ENCODE measurements at regions of chr6 and their contacts with region 1.

Region 1: GRCh38 chr6:112087136-112087911 is at the starts of genes FAM229B and TUBE1:
- DNase-seq: peak; percentile 70 to 96 (median 90)
- ATAC-seq: peak; percentile 98
- H3K4me3 ChIP-seq: peak within 1 kb of the TSS; percentile 64
- H3K4me3 Mint-ChIP-seq: no peak within 1 kb of the TSS
- H3K27ac ChIP-seq: peak within 1 kb of the TSS; percentile 87
- H3K27ac Mint-ChIP-seq: peak within 1 kb of the TSS in 1 of 9 donors; percentile 65
- H3K4me1 ChIP-seq: peaks cover 0 to 7% of the 10 kb centered on the region in 2 donors
- H3K4me1 Mint-ChIP-seq: peaks cover 0 to 18% (median 10%) of the 10 kb centered on the region in 7 donors
- H3K27me3 ChIP-seq: peaks cover 0 to 3% of the 10 kb centered on the region in 2 donors
- H3K27me3 Mint-ChIP-seq: peaks cover 0 to 37% (median 6%) of the 10 kb centered on the region in 5 donors
- total RNA-seq, gene FAM229B: 0.70 to 5.8 (median 2.0) TPM
- total RNA-seq, gene TUBE1: 19.3 to 50.0 (median 35.1) TPM

Region 2: DNA sequence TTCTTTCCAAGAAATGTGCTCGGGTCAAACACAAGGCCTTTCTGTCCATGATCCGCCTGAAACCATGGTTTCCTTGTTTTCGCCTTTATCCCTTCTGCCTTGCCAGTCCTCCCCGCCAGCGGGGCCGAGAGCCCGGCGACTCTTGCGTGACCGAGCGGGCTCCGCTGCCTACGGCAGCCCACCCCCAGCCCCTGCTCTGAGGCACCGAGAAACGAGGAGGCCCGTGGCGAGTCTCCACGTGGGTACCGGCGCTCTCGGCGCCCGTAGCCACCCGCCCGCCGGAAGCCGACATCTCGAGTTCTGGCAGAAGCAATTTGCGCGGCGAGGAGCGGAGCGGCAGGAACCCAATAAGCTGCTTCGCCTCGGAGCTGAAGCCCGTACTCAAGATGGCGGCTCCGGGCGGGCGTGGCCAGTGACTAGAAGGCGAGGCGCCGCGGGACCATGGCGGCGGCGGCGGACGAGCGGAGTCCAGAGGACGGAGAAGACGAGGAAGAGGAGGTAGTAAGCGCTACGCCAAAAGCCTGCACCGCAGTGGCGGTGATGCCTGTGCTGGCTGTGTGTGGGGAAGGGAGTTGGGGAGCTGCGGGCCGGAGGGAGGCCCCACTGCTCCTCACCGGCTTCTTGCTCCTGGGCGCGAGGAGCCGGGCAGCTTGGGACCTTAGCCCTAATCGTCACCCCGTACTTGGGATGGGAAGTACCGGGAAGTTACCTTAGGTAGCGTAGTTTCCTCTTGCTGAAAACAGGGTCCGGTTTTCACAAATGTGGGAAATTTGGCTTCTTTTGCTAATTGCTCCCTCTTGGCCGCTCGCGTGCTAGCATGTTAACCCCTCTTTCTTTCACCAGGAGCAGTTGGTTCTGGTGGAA is 1128.8 kb before region 1 on chr6 and contains the start of gene GTF3C6:
- CTCF ChIA-PET with region 1: no interaction called
- POLR2A ChIA-PET with region 1: no interaction called
- intact Hi-C with region 1: loop called (anchors 1 to 2 kb)
- DNase-seq: peak; percentile 85 to 94 (median 91)
- ATAC-seq: peak; percentile 99
- H3K4me3 ChIP-seq: peak within 1 kb of the TSS; percentile 86
- H3K4me3 Mint-ChIP-seq: peak within 1 kb of the TSS; percentile 95 to 99 (median 96)
- H3K27ac ChIP-seq: peak within 1 kb of the TSS; percentile 81
- H3K27ac Mint-ChIP-seq: peak within 1 kb of the TSS; percentile 96 to 99 (median 97)
- H3K4me1 ChIP-seq: peaks cover 4% of the 10 kb centered on the region in 2 donors
- H3K4me1 Mint-ChIP-seq: peaks cover 13 to 27% (median 20%) of the 10 kb centered on the region in 7 donors
- H3K27me3 ChIP-seq: no peaks in the 10 kb centered on the region
- H3K27me3 Mint-ChIP-seq: peaks cover 0 to 7% (median 0%) of the 10 kb centered on the region in 5 donors
- total RNA-seq, gene GTF3C6: 18.1 to 100 (median 29.9) TPM

Region 3: GRCh38 chr6:111087106-111087835 is 1000.1 kb before region 1 on chr6 and contains the start of gene SLC16A10:
- CTCF ChIA-PET with region 1: no interaction called
- POLR2A ChIA-PET with region 1: no interaction called
- intact Hi-C with region 1: loop called (anchors 1 to 5 kb)
- DNase-seq: peak; percentile 75 to 92 (median 90)
- ATAC-seq: peak; percentile 95
- H3K4me3 ChIP-seq: peak within 1 kb of the TSS; percentile 83
- H3K4me3 Mint-ChIP-seq: peak within 1 kb of the TSS; percentile 85 to 100 (median 97)
- H3K27ac ChIP-seq: peak within 1 kb of the TSS; percentile 80
- H3K27ac Mint-ChIP-seq: peak within 1 kb of the TSS; percentile 54 to 99 (median 96)
- H3K4me1 ChIP-seq: peaks cover 10 to 17% of the 10 kb centered on the region in 2 donors
- H3K4me1 Mint-ChIP-seq: peaks cover 20 to 54% (median 48%) of the 10 kb centered on the region in 7 donors
- H3K27me3 ChIP-seq: no peaks in the 10 kb centered on the region
- H3K27me3 Mint-ChIP-seq: peaks cover 0 to 24% (median 0%) of the 10 kb centered on the region in 5 donors
- total RNA-seq, gene SLC16A10: 1.6 to 27.7 (median 16.7) TPM

Region 4: DNA sequence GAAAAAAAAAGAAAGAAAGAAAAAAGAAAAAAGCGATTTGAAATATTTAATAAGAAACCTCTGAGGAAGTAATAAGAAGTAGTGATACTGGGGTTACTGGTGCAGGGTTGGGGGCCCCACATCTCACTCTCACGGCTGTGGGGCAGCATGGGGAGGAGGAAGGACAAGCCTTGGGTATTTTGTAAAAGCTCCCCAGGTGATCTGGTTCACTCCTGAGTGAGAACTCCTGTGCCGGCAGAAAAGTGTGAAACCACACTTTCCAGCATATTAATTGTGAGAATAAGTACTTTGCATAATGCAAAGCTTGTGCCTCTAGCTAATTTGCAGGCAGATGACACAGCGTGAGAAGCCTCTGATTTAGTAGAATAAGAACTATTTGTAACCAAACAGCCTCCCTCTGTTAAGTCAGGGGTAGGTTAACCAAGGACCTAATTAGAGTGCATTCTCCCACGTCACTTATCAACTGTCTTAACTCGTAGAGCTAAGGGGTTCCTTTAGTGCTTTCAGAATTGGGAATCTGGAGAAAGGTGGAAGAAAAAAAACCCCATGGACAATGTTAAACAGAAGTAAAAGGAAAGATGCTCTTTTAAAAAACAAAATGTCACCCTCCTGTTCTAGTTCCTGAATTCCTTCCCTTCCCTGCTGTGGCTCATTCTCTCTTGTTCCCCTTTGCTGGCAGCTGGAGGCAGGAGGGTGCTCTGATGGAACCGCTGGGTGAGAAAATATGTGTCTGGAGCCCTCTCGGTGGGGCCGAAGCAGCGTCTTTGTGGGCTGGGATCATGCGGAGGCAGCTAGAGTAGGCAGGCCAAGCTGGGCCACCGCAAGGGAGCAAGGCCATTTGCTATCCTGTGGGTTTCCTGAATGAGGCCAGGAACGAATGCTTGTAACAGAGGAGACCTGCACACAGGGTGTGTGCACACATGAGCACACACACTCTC is 322.8 kb before region 1 on chr6:
- CTCF ChIA-PET with region 1: no interaction called
- POLR2A ChIA-PET with region 1: no interaction called
- intact Hi-C with region 1: loop called in 1 of 2 experiments (anchors 5 kb)
- DNase-seq: peak in 2 of 9 donors; percentile 48 to 63
- ATAC-seq: peak; percentile 23
- H3K4me3 ChIP-seq: peak overlapping the region; percentile 18
- H3K4me3 Mint-ChIP-seq: peak overlapping the region; percentile 48 to 94 (median 69)
- H3K27ac ChIP-seq: peak overlapping the region; percentile 97
- H3K27ac Mint-ChIP-seq: peak overlapping the region; percentile 84 to 100 (median 98)
- H3K4me1 ChIP-seq: peaks cover 90 to 93% of the 10 kb centered on the region in 2 donors
- H3K4me1 Mint-ChIP-seq: peaks cover 74 to 100% (median 99%) of the 10 kb centered on the region in 7 donors
- H3K27me3 ChIP-seq: no peaks in the 10 kb centered on the region
- H3K27me3 Mint-ChIP-seq: no peaks in the 10 kb centered on the region

Region 5: GRCh38 chr6:112117554-112117953 is 30.2 kb after region 1 on chr6:
- CTCF ChIA-PET with region 1: no interaction called
- POLR2A ChIA-PET with region 1: no interaction called
- intact Hi-C with region 1: no loop called
- DNase-seq: no peak
- ATAC-seq: no peak
- H3K4me3 ChIP-seq: no peak overlapping the region
- H3K4me3 Mint-ChIP-seq: peak overlapping the region in 1 of 10 donors; percentile 63
- H3K27ac ChIP-seq: no peak overlapping the region
- H3K27ac Mint-ChIP-seq: peak overlapping the region in 1 of 9 donors; percentile 81
- H3K4me1 ChIP-seq: no peaks in the 10 kb centered on the region
- H3K4me1 Mint-ChIP-seq: peaks cover 0 to 19% (median 0%) of the 10 kb centered on the region in 7 donors
- H3K27me3 ChIP-seq: no peaks in the 10 kb centered on the region
- H3K27me3 Mint-ChIP-seq: peaks cover 14 to 22% (median 17%) of the 10 kb centered on the region in 5 donors

Region 6: DNA sequence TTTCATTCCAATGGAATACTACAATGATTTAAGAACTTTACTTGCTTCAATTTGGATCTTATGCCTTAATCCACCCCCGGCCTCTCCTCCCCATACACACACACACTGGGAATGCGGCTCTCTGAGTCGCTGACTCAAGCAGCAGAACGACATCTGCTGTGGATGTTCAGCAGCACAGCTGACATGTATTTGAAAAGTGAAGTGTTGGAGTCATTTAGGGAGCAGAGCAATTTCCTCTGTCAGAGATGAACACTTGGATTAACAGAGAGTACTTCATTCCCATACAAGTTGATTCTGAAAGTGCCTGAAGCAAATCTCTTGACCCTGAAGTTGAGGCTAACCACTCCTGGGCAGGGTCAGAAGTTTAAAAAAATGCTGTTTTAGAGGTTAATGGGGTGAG is 194.9 kb after region 1 on chr6:
- CTCF ChIA-PET with region 1: no interaction called
- POLR2A ChIA-PET with region 1: no interaction called
- intact Hi-C with region 1: loop called in 1 of 2 experiments (anchors 10 kb)
- DNase-seq: no peak
- ATAC-seq: no peak
- H3K4me3 ChIP-seq: no peak overlapping the region
- H3K4me3 Mint-ChIP-seq: no peak overlapping the region
- H3K27ac ChIP-seq: no peak overlapping the region
- H3K27ac Mint-ChIP-seq: no peak overlapping the region
- H3K4me1 ChIP-seq: peaks cover 0 to 17% of the 10 kb centered on the region in 2 donors
- H3K4me1 Mint-ChIP-seq: peaks cover 0 to 16% (median 9%) of the 10 kb centered on the region in 7 donors
- H3K27me3 ChIP-seq: no peaks in the 10 kb centered on the region
- H3K27me3 Mint-ChIP-seq: peaks cover 20 to 73% (median 42%) of the 10 kb centered on the region in 5 donors